Calu3 (cell line): ENCODE measurements at regions of chr14 and their contacts with region 1.

Region 1: DNA sequence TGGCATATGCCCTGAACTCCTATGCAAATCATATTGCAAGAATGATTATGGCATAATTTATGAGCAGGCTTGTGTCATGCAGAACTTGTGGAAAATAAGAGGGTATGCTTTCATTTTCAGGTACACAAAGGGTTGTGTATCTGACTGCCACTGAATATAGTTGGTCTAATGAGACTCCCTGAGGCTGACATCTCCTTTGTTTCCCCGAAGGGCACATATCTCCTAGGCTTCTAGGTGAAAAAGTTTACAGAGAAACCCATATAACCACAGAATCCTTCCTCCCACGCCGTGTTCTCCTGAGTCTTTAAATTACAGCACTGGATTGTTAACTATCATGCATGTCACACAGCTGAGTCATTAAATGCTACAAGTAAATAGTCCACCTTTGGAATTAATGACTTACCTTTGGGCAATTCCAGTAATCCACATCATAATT is 356.7 kb upstream of the DIO2 start:
- DNase-seq: peak; percentile 20
- H3K4me3 Mint-ChIP-seq: peak overlapping the region; percentile 44
- H3K27ac Mint-ChIP-seq: peak overlapping the region; percentile 85
- H3K4me1 Mint-ChIP-seq: peaks cover 22% of the 10 kb centered on the region
- H3K27me3 Mint-ChIP-seq: no peaks in the 10 kb centered on the region
- CTCF ChIP-seq: no peak

Region 2: GRCh38 chr14:80037349-80037748 is 530.7 kb before region 1 on chr14:
- CTCF ChIA-PET with region 1: no interaction called
- intact Hi-C with region 1: no loop called
- DNase-seq: no peak
- H3K4me3 Mint-ChIP-seq: no peak overlapping the region
- H3K27ac Mint-ChIP-seq: no peak overlapping the region
- H3K4me1 Mint-ChIP-seq: no peaks in the 10 kb centered on the region
- H3K27me3 Mint-ChIP-seq: no peaks in the 10 kb centered on the region
- CTCF ChIP-seq: no peak

Region 3: DNA sequence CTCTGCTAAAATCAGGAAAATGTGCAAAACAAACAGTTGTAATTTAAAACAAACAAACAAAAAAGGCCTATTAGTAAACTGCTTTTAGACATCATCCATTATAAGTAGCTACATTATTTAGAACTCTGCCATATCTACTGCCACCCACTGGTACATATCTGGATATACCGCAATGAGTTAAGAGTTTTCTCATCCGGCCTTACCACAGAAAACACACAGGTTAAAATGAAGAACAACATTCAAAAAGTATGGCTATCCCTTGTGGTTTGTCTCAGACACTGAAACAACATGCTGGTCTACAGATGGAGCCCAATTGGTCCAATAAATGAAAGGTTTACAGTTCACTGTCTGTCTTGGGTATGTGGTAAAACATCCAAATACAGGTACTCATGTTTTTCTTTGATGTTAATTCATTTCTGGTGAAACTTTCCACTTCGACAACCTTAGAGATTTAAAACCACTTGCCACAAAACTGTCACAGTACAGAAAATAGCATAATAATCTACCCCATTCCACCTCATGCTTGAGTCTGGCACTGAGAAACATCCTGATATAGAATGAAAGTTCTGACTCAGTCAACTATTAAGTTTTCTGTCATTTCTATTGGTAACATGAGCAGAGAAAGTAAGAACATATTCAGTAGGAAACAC is 19.2 kb after region 1 on chr14:
- CTCF ChIA-PET with region 1: interaction called, 4 read pairs
- intact Hi-C with region 1: loop called (anchors 2 kb)
- DNase-seq: no peak
- H3K4me3 Mint-ChIP-seq: no peak overlapping the region
- H3K27ac Mint-ChIP-seq: no peak overlapping the region
- H3K4me1 Mint-ChIP-seq: peaks cover 30% of the 10 kb centered on the region
- H3K27me3 Mint-ChIP-seq: no peaks in the 10 kb centered on the region
- CTCF ChIP-seq: peak; percentile 15